Dorsolateral prefrontal cortex (tissue), 120 donors: ENCODE measurements at regions of chr3 and their contacts with region 1.

Region 1: DNA sequence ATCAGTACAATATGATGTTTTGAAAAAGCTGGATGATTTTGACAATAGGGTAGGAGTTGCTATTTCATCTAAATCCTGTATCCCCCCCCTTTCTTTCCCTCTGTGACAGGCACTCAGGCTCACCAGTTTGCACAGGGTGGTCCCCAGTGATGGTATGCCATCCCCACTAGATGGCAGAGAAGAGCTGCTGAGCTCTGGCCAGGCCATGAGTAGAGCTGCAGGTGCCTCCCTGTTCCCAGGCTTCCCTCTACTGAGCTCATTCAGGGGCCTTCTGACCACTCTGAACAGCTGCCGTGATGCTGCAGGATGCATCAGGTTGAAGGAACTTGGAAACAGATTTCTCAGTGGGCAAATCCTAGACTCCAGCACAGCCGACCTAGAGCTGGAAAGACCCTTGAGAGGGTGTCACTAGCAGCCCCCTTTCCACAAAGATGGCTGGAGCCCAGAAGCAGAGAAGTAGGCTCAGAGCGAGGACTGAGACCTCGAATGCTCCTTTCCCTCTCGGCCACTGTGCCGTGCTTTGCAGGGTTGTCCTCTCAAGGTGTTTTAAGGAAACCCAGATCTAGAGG is 45.1 kb downstream of the EFCAB12 start:
- DNase-seq: peak; percentile 26 to 78 (median 68)
- H3K4me3 ChIP-seq: no peak overlapping the region
- H3K27ac ChIP-seq: peak overlapping the region in 52 of 59 donors; percentile 0 to 91 (median 59)
- H3K27me3 ChIP-seq: no peaks in the 10 kb centered on the region
- CTCF ChIP-seq: peak in 55 of 56 donors; percentile 35 to 83 (median 74)

Region 2: DNA sequence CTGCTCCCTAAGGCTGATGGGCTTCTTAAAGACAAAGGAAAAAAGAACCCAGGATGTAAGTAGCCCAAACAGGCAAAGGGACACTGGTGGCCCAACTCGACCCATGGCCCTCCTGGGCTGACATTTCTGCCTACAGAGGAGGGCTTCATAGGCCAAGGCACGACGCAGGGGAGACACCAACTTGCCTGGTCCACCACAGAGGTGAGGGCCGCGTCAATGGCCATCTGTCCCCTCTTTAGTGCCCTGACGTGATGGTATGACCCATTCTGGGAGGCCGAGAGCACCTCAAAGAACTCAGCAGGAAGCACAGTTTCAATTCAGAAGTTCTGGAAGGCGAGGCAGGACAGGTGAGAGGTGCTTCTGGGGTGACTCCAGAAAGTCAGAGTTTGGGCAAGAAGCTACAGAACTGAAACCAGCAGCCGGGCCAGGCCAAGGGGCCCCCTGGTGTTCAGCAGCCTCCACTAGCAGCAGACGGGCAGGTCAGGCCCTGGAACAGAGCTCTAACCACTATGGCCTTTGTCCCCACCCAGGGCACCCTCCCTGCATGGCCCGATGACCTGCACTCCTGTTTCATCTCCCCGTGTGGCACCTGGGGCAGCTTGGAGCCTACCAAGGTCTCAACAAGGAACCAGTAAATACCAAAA is 59.6 kb before region 1 on chr3:
- intact Hi-C with region 1: loop called in 1 of 2 experiments (anchors 5 kb)
- DNase-seq: peak in 1 of 10 donors; percentile 20
- H3K4me3 ChIP-seq: no peak overlapping the region
- H3K27ac ChIP-seq: no peak overlapping the region
- H3K27me3 ChIP-seq: no peaks in the 10 kb centered on the region
- CTCF ChIP-seq: no peak